Right ventricle myocardium inferior (tissue), 1 donor: ENCODE measurements at regions of chr6 and their contacts with region 1.

Region 1: GRCh38 chr6:53348371-53349208 is at the start of gene ELOVL5:
- DNase-seq: peak; percentile 100
- ATAC-seq: peak; percentile 94
- total RNA-seq, gene ELOVL5: 28.0 TPM

Region 2: DNA sequence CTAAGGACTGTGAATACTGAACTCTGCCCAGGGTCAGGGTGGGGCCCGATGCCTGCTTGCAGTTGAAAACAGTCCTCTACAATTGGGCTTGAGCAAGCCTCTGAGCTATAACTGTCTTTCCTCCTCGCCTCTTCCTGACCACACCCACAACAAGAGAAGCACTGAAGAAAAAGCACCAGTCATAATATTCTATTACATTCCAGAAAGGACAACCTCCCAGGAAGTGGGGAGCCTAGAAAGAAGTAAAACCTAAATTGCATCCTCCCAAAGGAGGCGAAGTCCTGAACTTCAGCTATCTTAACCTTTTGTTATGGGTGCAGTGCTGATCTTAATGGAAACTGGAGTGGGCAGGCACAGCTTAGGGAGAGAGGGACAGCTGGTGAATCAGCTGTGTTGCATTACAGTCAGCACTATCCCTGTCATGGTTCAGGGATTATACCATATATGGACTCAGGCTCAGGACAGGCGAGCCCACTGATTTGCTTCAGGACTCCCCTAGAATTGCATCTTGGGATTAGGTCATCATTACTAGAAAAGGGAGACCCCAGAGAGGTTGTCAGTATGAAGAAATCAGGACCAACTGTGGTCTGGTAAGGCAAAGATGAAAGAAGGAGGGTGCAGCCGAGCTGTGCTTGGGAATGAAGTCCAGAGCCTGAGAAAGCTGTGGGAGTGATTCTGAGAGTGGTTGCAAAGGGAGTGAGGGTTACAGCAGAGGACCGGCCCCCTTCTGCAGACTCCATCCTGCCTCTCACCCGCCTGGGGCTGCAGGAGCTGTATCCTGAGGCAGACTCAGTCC is 753.4 kb before region 1 on chr6:
- intact Hi-C with region 1: no loop called
- DNase-seq: no peak
- ATAC-seq: peak; percentile 87

Region 3: GRCh38 chr6:53250176-53251032 is 98.2 kb before region 1 on chr6:
- intact Hi-C with region 1: loop called (anchors 10 kb)
- DNase-seq: no peak
- ATAC-seq: no peak

Region 4: DNA sequence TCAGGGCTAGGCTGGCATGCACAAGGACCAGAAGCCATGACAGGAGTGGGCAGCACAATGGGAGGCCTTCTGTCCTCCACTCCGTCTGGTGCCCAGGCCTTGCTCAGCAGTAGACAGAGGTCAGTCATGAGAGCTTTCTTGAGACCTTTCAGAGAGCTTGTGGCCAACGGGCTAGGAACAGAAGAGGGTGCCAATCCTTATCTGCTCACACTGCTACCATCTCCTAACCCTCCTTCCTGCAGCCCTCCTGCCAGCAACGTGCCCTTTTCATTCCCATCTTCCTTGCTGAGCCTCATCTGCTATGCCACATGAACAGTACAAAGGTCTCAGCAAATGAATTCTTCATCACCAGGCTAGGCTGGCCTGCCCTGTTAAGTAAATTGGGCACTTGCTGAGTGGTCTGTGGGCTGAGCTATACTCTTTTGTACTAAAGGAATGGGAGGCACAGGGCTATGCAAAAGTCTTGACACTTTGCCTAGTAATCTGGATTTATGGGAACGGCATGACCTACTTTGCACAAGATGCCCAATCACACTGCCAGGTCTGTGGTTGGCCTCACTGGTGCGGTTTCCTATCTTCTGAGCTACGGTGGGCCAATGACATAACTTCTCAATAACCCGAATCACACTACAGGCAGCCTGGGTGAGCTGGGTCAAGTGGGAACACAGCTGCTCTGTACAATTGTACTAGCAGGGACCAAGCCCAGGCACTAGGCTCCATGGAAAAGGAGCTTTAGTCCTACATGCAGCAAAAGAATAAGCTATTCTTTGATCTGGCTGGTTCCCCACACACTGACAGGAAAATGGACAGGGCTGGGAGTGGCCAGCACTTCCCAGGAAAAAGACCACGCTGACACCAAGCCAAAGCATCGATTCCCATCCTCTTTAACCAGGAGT is 47.7 kb before region 1 on chr6:
- intact Hi-C with region 1: loop called (anchors 2 kb)
- DNase-seq: no peak
- ATAC-seq: peak; percentile 77